Activated CD8-positive, alpha-beta memory T cell treated with anti-CD3 and anti-CD28 coated beads, Interleukin-2, amount 10 ng/mL, durations not matched to agents 7 days and 5 days (primary cell): ENCODE measurements at regions of chr11 and their contacts with region 1.

Region 1: GRCh38 chr11:93529707-93530467 is 13.3 kb downstream of the SMCO4 start:
- DNase-seq: peak; percentile 61
- ATAC-seq: peak; percentile 28
- H3K4me3 Mint-ChIP-seq: peak overlapping the region; percentile 3
- H3K27ac Mint-ChIP-seq: peak overlapping the region; percentile 83
- H3K4me1 Mint-ChIP-seq: peaks cover 85% of the 10 kb centered on the region
- H3K27me3 Mint-ChIP-seq: no peaks in the 10 kb centered on the region

Region 2: DNA sequence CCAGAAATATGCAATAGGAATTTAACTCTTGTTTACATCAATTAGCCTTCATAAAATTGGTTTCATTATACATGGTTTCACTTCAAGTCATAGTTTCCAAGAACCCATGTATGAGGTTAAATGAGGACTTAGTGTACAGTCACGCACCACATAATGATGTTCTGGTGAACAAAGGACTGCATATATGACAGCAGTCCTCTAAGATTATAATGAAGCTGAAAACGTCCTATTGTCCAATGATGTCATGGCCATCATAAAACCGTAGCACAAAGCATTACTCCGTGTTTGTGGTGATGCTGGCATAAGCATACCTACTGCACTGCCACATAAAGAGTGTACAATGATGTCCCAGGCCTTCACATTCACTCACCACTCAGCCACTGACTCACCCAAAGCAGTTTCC is 17.8 kb before region 1 on chr11:
- CTCF ChIA-PET with region 1: interaction called, 16 read pairs
- DNase-seq: peak; percentile 66
- ATAC-seq: peak; percentile 95
- H3K4me3 Mint-ChIP-seq: peak overlapping the region; percentile 60
- H3K27ac Mint-ChIP-seq: peak overlapping the region; percentile 95
- H3K4me1 Mint-ChIP-seq: peaks cover 49% of the 10 kb centered on the region
- H3K27me3 Mint-ChIP-seq: no peaks in the 10 kb centered on the region

Region 3: GRCh38 chr11:93639548-93639947 is 109.7 kb after region 1 on chr11:
- CTCF ChIA-PET with region 1: no interaction called
- DNase-seq: no peak
- ATAC-seq: no peak
- H3K4me3 Mint-ChIP-seq: no peak overlapping the region
- H3K27ac Mint-ChIP-seq: no peak overlapping the region
- H3K4me1 Mint-ChIP-seq: no peaks in the 10 kb centered on the region
- H3K27me3 Mint-ChIP-seq: peaks cover 15% of the 10 kb centered on the region